ENCODE measurements at regions of chr3 and their contacts with region 1.

Region 1: DNA sequence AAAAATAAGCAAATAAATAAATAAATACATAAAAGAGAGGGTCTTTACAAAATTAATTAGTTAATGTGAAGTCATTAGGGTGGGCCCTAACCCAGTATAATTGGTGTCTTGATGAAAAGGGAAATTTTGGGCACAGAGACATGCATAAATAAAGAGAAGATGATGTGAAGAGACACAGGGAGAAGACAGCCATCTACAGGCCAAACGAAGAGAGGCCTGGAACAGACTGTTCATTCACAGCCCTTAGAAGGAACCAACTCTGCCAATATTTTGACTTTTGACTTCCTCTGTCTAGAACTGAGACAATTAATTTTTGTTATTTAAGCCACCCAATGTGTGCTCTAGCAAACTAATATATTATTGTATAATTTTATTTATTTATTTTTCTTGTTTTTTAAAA is 29.6 kb upstream of the SELENOK start:
- DNase-seq: peak; percentile 23
- H3K4me3 Mint-ChIP-seq: no peak overlapping the region
- H3K27ac Mint-ChIP-seq: no peak overlapping the region
- H3K4me1 Mint-ChIP-seq: no peaks in the 10 kb centered on the region
- H3K27me3 Mint-ChIP-seq: peaks cover 40% of the 10 kb centered on the region
- CTCF ChIP-seq: peak; percentile 16

Region 2: DNA sequence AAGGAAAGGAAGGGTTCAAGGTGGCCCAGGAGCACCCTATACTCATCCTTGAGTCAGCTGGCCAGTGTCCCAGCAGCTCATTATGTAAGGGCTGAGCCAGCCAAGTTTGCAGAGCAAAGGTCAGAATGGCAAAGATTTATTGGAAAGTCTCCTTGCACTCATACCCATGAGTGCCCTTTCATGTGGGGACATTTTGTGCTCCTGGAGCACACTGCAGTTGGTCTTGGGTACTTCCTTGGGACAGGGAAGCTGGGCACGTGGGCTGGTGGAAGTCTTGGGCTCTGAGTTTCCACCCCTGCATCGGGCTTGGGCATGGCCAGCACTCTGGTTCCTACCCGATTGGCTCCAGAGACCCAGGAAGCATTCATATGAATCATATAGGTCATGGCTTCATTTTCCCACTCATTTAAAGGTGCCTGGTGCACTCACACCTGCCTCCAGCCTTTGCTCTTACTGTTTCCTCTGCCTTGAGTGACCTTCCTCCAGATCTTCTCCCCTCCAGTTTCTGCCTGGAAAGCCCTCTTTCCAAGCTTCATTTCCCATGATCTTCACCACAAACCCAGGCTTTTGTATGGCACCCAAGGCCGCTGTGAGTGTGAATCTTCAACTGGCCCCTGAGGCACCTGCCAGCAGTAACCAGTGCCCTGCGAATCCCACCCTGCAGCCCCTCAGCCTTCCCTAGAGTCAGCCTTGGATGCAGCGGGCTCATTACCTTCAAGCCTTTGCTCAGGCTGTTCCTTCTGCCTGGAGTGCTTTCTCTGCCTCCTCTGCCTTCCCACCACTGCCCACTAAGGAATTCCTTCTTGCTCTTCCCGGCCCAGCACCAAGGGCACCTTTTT is 770.8 kb before region 1 on chr3:
- CTCF ChIA-PET with region 1: no interaction called
- POLR2A ChIA-PET with region 1: no interaction called
- intact Hi-C with region 1: no loop called
- DNase-seq: peak; percentile 89
- H3K4me3 Mint-ChIP-seq: peak overlapping the region; percentile 40
- H3K27ac Mint-ChIP-seq: no peak overlapping the region
- H3K4me1 Mint-ChIP-seq: peaks cover 21% of the 10 kb centered on the region
- H3K27me3 Mint-ChIP-seq: no peaks in the 10 kb centered on the region
- CTCF ChIP-seq: no peak

Region 3: DNA sequence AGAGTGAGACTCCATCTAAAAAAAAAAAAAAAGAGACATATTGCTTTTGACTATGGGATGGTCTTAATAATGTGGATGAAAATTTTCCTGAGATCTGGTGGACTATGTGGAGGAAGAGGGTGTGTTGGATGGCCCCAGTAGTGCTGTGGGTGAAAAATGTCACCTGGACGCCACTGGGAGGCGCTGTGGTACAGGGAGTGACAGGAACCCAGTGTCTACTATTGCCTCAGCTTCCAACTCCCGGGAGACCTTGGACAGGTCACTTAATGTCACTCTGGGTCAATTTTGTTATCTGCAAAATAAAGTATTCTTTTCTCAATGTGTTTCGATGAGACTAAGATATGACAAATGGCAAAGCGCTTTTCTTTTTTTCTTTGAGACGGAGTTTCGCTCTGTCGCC is 546.3 kb before region 1 on chr3:
- CTCF ChIA-PET with region 1: no interaction called
- POLR2A ChIA-PET with region 1: no interaction called
- intact Hi-C with region 1: loop called (anchors 5 kb)
- DNase-seq: peak; percentile 83
- H3K4me3 Mint-ChIP-seq: no peak overlapping the region
- H3K27ac Mint-ChIP-seq: no peak overlapping the region
- H3K4me1 Mint-ChIP-seq: peaks cover 4% of the 10 kb centered on the region
- H3K27me3 Mint-ChIP-seq: peaks cover 26% of the 10 kb centered on the region
- CTCF ChIP-seq: peak; percentile 87

Region 4: GRCh38 chr3:53668872-53669271 is 252.4 kb before region 1 on chr3:
- CTCF ChIA-PET with region 1: no interaction called
- POLR2A ChIA-PET with region 1: no interaction called
- intact Hi-C with region 1: loop called (anchors 5 kb)
- DNase-seq: peak; percentile 13
- H3K4me3 Mint-ChIP-seq: no peak overlapping the region
- H3K27ac Mint-ChIP-seq: no peak overlapping the region
- H3K4me1 Mint-ChIP-seq: no peaks in the 10 kb centered on the region
- H3K27me3 Mint-ChIP-seq: peaks cover 43% of the 10 kb centered on the region
- CTCF ChIP-seq: peak; percentile 31

Region 5: DNA sequence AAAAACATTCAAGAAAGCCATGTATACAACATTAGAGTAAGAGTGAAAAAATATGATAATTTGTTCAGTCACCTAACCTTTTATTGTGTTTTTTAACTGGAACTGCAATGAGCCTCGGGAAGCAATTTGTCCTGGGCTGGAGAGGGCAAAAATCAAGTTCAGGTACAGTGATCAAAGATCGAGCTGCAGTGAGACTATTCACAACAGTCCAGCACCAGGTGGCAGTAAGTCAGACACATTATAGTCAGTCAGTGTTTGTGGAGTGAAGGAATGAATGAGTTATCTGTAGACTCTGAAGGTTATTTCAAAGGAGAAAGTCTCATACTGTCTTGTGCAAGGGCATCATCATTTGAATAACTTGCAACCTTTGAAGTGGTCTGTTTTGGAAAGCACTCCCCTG is 191.7 kb before region 1 on chr3:
- CTCF ChIA-PET with region 1: no interaction called
- POLR2A ChIA-PET with region 1: no interaction called
- intact Hi-C with region 1: loop called (anchors 2 kb)
- DNase-seq: peak; percentile 18
- H3K4me3 Mint-ChIP-seq: no peak overlapping the region
- H3K27ac Mint-ChIP-seq: no peak overlapping the region
- H3K4me1 Mint-ChIP-seq: no peaks in the 10 kb centered on the region
- H3K27me3 Mint-ChIP-seq: peaks cover 28% of the 10 kb centered on the region
- CTCF ChIP-seq: no peak

Region 6: DNA sequence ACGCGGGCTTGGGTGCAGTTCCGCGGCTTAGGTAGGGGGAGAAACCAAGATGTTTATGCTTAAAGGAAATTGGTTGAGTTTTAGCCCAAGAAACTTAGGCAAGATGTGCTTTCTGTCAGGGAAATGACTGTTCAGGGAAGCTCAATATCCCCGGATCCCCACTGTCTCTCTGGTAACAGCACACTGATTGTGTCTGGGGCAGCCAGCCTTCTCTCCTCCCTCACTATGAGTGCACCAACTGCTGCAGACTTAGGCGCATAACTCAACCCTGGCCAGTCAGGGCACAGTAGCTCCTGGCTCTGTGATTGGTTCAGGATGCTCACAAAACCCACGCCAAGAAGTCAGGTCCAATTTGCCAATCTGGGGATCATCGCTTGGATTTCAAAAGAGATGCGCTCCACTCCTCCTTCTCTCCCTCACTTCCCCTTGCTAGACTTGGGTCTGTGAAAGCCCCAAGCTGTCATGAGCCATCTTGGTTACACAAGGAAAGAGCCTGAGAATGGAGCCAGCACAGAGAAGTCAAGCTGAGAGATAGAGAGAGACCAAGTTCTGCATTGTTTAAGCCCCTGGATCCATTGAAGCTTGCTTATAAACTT is 158.5 kb after region 1 on chr3:
- CTCF ChIA-PET with region 1: no interaction called
- POLR2A ChIA-PET with region 1: no interaction called
- intact Hi-C with region 1: no loop called
- DNase-seq: no peak
- H3K4me3 Mint-ChIP-seq: no peak overlapping the region
- H3K27ac Mint-ChIP-seq: no peak overlapping the region
- H3K4me1 Mint-ChIP-seq: no peaks in the 10 kb centered on the region
- H3K27me3 Mint-ChIP-seq: no peaks in the 10 kb centered on the region
- CTCF ChIP-seq: no peak

Measured in MCF 10A (cell line).